WTC11 (cell line): ENCODE measurements at regions of chr16 and their contacts with region 1.

Region 1: DNA sequence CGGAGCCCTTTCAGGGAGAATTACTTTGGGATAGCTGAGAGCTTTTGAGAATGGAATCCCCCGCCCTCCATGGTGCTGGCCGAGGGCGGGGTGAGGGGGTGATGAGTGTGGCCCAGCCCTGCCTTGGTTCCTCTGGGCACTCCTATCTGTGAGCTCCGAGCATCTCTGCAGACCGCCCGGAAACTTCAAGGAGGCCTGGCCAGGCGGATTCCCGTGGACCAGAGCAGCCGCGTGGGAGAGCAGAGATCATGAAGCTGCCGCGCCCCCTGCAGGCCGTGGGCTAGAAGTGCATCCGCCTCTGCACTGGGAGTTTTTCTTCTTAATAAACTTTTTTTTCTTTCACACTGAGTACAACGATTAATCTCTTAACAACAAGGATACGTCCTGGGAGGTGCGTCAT is 392.9 kb upstream of the EEF2KMT start:
- DNase-seq: peak; percentile 67
- ATAC-seq: peak; percentile 77
- H3K4me3 Mint-ChIP-seq: peak overlapping the region; percentile 12; the same call in 1 of the 2 replicates
- H3K27ac Mint-ChIP-seq: no peak overlapping the region
- H3K4me1 Mint-ChIP-seq: peaks cover 6% of the 10 kb centered on the region; the same call in 1 of the 2 replicates
- H3K27me3 Mint-ChIP-seq: no peaks in the 10 kb centered on the region
- CTCF ChIP-seq: peak; percentile 98

Region 2: GRCh38 chr16:5234295-5235050 is 256.0 kb before region 1 on chr16:
- CTCF ChIA-PET with region 1: interaction called, 10 read pairs
- POLR2A ChIA-PET with region 1: no interaction called
- DNase-seq: no peak
- ATAC-seq: peak; percentile 61
- H3K4me3 Mint-ChIP-seq: no peak overlapping the region
- H3K27ac Mint-ChIP-seq: no peak overlapping the region
- H3K4me1 Mint-ChIP-seq: peaks cover 19% of the 10 kb centered on the region
- H3K27me3 Mint-ChIP-seq: peaks cover 22% of the 10 kb centered on the region
- CTCF ChIP-seq: no peak

Region 3: DNA sequence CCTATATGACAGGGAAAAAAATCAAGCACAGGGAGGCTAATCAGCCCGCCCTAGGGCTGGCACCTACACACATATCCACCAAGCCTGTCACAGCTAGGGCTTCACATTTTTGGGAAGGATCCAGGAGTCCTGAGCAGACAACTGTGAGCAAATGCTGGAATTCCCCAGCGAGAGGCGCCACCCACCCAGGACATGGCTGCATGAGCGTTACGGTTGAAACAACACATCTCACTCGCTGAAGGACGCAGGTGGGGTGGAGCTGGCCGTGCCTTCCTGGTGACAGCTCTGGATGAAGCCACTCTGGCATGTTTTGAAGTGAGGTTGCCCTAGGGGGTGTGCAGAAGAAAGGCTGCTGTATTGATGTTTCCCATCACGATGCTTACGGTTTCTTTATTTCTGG is 77.8 kb before region 1 on chr16:
- CTCF ChIA-PET with region 1: interaction called, 37 read pairs
- POLR2A ChIA-PET with region 1: no interaction called
- DNase-seq: peak; percentile 61
- ATAC-seq: peak; percentile 84
- H3K4me3 Mint-ChIP-seq: no peak overlapping the region
- H3K27ac Mint-ChIP-seq: no peak overlapping the region
- H3K4me1 Mint-ChIP-seq: peaks cover 3% of the 10 kb centered on the region; the same call in 1 of the 2 replicates
- H3K27me3 Mint-ChIP-seq: peaks cover 8% of the 10 kb centered on the region
- CTCF ChIP-seq: no peak

Region 4: GRCh38 chr16:5428932-5429331 is 61.6 kb before region 1 on chr16:
- CTCF ChIA-PET with region 1: interaction called, 13 read pairs
- POLR2A ChIA-PET with region 1: no interaction called
- DNase-seq: peak; percentile 55
- ATAC-seq: peak; percentile 95
- H3K4me3 Mint-ChIP-seq: no peak overlapping the region
- H3K27ac Mint-ChIP-seq: no peak overlapping the region
- H3K4me1 Mint-ChIP-seq: peaks cover 19% of the 10 kb centered on the region
- H3K27me3 Mint-ChIP-seq: peaks cover 3% of the 10 kb centered on the region; the same call in 1 of the 2 replicates
- CTCF ChIP-seq: no peak

Region 5: GRCh38 chr16:5450409-5451104 is 39.9 kb before region 1 on chr16:
- CTCF ChIA-PET with region 1: interaction called, 16 read pairs
- POLR2A ChIA-PET with region 1: no interaction called
- DNase-seq: peak; percentile 33
- ATAC-seq: peak; percentile 66
- H3K4me3 Mint-ChIP-seq: peak overlapping the region; percentile 39
- H3K27ac Mint-ChIP-seq: peak overlapping the region; percentile 45; the same call in 1 of the 2 replicates
- H3K4me1 Mint-ChIP-seq: peaks cover 65% of the 10 kb centered on the region
- H3K27me3 Mint-ChIP-seq: peaks cover 38% of the 10 kb centered on the region
- CTCF ChIP-seq: no peak

Region 6: GRCh38 chr16:5479926-5480325 is 10.6 kb before region 1 on chr16:
- CTCF ChIA-PET with region 1: interaction called, 31 read pairs
- POLR2A ChIA-PET with region 1: no interaction called
- DNase-seq: no peak
- ATAC-seq: peak; percentile 44; the same call in 1 of the 2 replicates
- H3K4me3 Mint-ChIP-seq: no peak overlapping the region
- H3K27ac Mint-ChIP-seq: no peak overlapping the region
- H3K4me1 Mint-ChIP-seq: peaks cover 23% of the 10 kb centered on the region
- H3K27me3 Mint-ChIP-seq: peaks cover 12% of the 10 kb centered on the region
- CTCF ChIP-seq: no peak

Region 7: GRCh38 chr16:5523829-5524228 is 33.3 kb after region 1 on chr16:
- CTCF ChIA-PET with region 1: no interaction called
- POLR2A ChIA-PET with region 1: no interaction called
- DNase-seq: no peak
- ATAC-seq: no peak
- H3K4me3 Mint-ChIP-seq: no peak overlapping the region
- H3K27ac Mint-ChIP-seq: no peak overlapping the region
- H3K4me1 Mint-ChIP-seq: no peaks in the 10 kb centered on the region
- H3K27me3 Mint-ChIP-seq: peaks cover 8% of the 10 kb centered on the region
- CTCF ChIP-seq: no peak

Region 8: DNA sequence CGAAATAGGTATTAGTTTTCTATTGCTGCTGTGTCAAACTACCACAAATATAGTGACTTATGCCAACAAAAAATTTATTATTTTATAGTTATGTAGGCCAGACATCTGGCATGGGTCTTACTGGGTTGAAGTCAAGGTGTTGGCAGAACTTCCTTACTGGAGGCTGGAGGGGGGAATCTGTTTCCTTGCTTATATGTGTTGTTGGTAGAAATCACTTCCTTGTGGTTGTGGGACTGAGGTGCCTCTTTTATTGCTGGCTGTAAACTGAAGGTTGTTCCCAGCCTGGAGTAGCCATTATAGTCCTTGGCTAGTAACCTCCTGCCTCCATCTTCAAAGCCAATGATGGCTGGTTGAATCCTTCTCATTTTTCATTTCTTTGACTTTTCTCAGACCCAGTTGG is 46.8 kb after region 1 on chr16:
- CTCF ChIA-PET with region 1: no interaction called
- POLR2A ChIA-PET with region 1: no interaction called
- DNase-seq: no peak
- ATAC-seq: no peak
- H3K4me3 Mint-ChIP-seq: no peak overlapping the region
- H3K27ac Mint-ChIP-seq: no peak overlapping the region
- H3K4me1 Mint-ChIP-seq: no peaks in the 10 kb centered on the region
- H3K27me3 Mint-ChIP-seq: peaks cover 18% of the 10 kb centered on the region
- CTCF ChIP-seq: no peak